A549 (cell line): ENCODE measurements at regions of chr21 and their contacts with region 1.

Region 1: DNA sequence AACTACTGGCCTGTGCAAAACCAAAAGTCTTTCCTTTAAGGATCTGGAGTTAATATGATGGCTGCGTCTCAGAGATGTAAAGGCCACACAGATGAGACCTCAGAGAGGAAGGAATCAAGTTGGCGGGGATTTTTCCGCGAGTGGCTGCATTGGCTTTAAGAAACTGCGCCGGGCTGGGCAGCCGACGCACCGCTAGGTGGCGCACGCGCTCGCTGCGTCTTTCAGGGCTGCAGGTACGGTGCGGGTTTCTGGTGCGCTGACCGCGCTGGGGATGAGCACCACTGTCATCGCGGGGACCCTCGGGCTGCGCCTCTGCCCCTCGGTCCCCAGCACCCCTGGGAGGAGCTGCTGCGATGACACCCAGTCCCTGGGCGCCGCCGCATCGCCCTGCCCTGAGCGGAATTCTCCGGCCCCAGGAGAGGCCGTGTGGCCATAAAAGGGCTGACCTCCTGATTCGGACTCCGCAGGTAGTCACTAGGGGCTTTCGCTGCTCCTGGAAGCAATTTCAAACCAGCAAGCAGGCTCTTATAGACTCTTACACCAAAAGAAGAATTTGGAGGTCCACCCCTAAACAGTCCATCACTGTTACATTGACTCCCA is 241.0 kb downstream of the KCNJ6 start:
- DNase-seq: peak; percentile 14 to 49
- ATAC-seq: peak; percentile 77 to 91; a peak in 5 of 6 replicates
- H3K4me3 ChIP-seq: no peak overlapping the region
- H3K27ac ChIP-seq: peak overlapping the region; percentile 56 to 65; a peak in 5 of 6 replicates
- H3K4me1 ChIP-seq: peaks cover 26% of the 10 kb centered on the region
- CTCF ChIP-seq: peak; percentile 73
- EP300 ChIP-seq: no peak
- POLR2A ChIP-seq: no peak
- RAD21 ChIP-seq: peak; percentile 65 to 76

Region 2: GRCh38 chr21:37571442-37571841 is 103.9 kb before region 1 on chr21:
- CTCF ChIA-PET with region 1: no interaction called
- POLR2A ChIA-PET with region 1: no interaction called
- DNase-seq: no peak
- ATAC-seq: no peak
- H3K4me3 ChIP-seq: no peak overlapping the region
- H3K27ac ChIP-seq: no peak overlapping the region
- H3K4me1 ChIP-seq: no peaks in the 10 kb centered on the region
- CTCF ChIP-seq: no peak
- EP300 ChIP-seq: no peak
- POLR2A ChIP-seq: no peak
- RAD21 ChIP-seq: no peak

Region 3: DNA sequence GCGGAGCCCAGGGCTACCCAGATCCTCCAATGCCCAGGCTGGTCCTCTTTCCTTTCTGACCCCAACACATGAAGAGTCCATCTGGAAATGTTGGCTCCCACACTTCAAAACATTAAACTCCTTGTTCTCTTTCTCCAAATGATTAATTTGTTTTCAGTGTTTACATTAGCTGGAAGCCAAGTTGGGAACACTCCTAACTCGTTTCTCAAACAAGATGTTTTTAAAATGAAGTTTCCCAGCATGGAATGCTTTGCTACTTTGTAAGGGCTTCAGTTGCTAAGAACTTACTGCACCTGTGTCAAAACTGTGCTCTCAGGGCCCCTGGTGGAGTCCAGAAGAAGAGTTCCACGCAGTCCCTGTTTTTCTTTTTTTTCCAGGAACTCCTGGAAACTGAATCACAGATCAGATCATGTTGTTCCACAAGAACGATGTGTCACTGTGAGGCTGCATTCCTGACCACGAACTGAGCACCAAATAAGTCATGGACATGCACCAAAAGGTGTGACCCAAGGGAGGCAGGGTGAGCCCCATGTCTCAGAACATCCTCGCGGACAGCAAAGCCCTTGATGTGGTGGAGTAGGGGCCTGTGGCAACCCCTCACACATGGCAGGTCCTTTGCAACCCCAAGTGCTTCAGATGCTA is 16.4 kb before region 1 on chr21:
- CTCF ChIA-PET with region 1: interaction called, 33 read pairs
- POLR2A ChIA-PET with region 1: no interaction called
- DNase-seq: peak; percentile 43 to 79
- ATAC-seq: peak; percentile 91 to 92
- H3K4me3 ChIP-seq: no peak overlapping the region
- H3K27ac ChIP-seq: peak overlapping the region; percentile 75 to 79
- H3K4me1 ChIP-seq: peaks cover 24% of the 10 kb centered on the region
- CTCF ChIP-seq: no peak
- EP300 ChIP-seq: no peak
- POLR2A ChIP-seq: no peak
- RAD21 ChIP-seq: peak in 1 of 2 experiments; percentile 24; a peak in 2 of 5 replicates

Region 4: DNA sequence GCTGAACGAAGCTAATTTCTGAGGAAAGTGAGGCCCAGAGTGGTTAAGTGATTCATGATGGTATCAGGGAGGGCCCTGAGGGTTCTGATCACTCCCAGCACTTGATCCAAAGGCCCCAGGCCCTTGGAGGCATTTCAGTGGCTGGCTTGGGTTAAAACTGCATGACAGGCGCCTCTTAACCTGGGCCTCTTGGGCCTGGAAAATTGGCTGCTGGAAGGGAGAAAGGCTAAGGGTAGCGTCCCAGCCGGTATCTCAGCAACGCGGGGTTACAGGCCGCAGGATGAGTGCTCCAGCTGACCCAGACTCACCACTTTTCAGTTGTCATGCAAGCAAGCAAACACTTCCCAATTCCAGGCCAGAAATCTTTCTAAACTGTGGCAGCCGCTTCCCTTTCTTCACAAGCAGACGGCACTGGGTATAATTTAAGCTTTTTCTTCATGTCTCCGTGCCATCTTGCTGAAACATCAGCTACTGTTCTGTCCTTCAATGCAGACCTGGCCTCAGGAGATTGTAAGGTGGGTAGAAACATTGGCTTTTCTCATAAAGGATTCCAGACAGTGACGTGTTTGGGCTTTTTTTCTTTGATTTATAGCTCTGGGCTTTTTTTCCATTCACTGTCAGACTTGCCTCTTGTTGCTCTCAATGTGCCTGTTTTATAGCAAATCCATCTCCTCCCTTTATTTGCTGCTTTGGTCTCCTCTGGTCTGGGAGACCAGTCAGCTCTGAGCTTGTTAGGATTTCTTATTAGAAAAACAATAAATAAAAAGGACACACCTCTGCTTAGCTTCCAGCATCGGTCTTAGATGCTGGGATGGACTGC is 11.9 kb after region 1 on chr21:
- CTCF ChIA-PET with region 1: interaction called, 17 read pairs
- POLR2A ChIA-PET with region 1: no interaction called
- DNase-seq: no peak
- ATAC-seq: no peak
- H3K4me3 ChIP-seq: no peak overlapping the region
- H3K27ac ChIP-seq: no peak overlapping the region
- H3K4me1 ChIP-seq: no peaks in the 10 kb centered on the region
- CTCF ChIP-seq: no peak
- EP300 ChIP-seq: no peak
- POLR2A ChIP-seq: no peak
- RAD21 ChIP-seq: no peak

Region 5: DNA sequence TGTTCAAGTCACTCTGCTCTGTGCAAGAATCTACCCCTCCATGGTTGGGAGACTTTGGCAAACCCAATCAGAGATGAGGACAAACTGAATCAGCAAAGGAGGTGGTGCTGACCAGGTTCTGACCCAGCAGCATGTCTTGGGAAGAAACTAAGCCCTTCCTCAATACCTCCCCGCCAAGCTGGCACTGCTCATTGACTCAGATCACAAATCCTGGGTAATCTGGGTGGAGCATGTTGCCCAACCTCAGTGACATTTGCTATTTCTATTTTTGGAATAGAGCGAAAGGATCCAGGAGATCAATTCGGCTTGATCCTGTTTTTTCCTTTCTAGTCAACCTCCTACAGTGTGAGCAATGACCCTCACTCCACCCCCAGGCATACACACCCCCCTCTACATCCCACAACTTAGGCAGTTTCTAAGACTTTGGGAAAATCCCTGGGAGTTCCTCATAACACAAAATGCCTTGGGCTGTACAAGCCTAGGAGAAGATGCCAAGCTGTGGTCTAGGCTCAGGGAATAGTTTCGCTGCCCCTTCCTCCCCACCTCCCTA is 407.7 kb after region 1 on chr21:
- CTCF ChIA-PET with region 1: no interaction called
- POLR2A ChIA-PET with region 1: no interaction called
- DNase-seq: no peak
- ATAC-seq: no peak
- H3K4me3 ChIP-seq: no peak overlapping the region
- H3K27ac ChIP-seq: 0 out of 6 replicates have a peak overlapping the region, but pooled peaks of 1 of the 2 experiments have one; percentile 19
- H3K4me1 ChIP-seq: peaks cover 10% of the 10 kb centered on the region; the same call in 1 of the 3 replicates
- CTCF ChIP-seq: no peak
- EP300 ChIP-seq: no peak
- POLR2A ChIP-seq: no peak
- RAD21 ChIP-seq: no peak